AG04449 (cell line): ENCODE measurements at regions of chr1 and their contacts with region 1.

Region 1: DNA sequence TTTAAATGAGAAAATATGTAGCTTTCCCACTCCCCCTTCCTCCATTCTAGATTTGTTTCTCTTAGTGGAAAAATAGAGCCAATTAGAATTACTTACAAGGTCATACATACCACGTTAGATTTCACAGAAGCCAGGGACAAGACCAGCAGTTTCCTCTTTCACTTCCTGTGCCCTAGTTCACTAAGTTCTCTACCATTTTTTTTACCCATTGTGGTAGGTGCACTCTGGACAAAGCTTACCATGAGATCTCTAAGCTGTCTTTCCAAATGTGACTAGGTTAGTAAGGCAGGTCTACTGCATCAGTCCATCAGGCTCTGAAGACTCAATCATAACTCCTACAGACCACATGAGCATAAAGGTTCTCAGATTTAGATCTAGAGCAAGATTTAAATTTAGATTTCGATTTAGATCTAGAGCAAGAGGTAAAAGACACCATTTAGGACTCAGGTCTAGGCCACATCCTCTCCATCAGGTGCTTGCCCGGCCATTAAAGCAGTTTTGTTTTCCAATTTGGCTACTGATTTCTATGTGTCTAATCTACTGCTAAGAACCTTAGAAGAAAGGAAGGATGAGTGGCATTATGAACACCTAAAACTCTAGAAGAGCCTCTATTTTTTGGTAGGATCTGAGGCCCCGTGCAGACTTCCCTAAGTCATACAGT is 235.3 kb downstream of the FAF1 start:
- DNase-seq: no peak
- H3K4me3 ChIP-seq: no peak overlapping the region
- CTCF ChIP-seq: no peak

Region 2: DNA sequence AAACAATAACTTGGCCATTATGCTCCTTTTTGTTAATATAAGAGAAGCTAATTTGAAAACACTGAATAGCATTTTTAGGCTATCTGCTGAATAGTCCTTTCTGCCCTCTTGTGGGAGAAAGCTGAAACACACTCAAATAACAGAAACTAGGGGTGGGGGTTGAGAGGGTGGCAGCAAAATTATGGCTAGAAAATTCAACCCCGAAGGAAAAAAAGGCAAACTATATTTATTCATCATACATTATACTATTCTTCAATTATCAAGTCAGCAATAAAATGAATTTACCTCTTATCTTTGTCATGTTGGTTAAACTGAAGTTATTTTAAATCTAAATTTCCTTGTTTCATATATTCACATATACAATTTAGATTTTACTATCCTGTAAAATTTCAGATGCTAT is 20.6 kb before region 1 on chr1:
- CTCF ChIA-PET with region 1: interaction called, 29 read pairs
- POLR2A ChIA-PET with region 1: no interaction called
- DNase-seq: no peak
- H3K4me3 ChIP-seq: no peak overlapping the region
- CTCF ChIP-seq: peak; percentile 65

Region 3: GRCh38 chr1:50735443-50735842 is 10.7 kb after region 1 on chr1:
- CTCF ChIA-PET with region 1: interaction called, 15 read pairs
- POLR2A ChIA-PET with region 1: no interaction called
- DNase-seq: no peak
- H3K4me3 ChIP-seq: no peak overlapping the region
- CTCF ChIP-seq: peak; percentile 14